ENCODE measurements at regions of chr11 and their contacts with region 1.

Region 1: GRCh38 chr11:118503216-118503615 is 24.1 kb upstream of the TTC36 start:
- DNase-seq: no peak
- ATAC-seq: no peak
- H3K4me3 ChIP-seq: no peak overlapping the region
- H3K27ac ChIP-seq: no peak overlapping the region
- H3K4me1 ChIP-seq: no peaks in the 10 kb centered on the region
- H3K27me3 ChIP-seq: no peaks in the 10 kb centered on the region
- CTCF ChIP-seq: no peak

Region 2: GRCh38 chr11:118366287-118366686 is 136.9 kb before region 1 on chr11:
- intact Hi-C with region 1: no loop called
- DNase-seq: peak in 2 of 6 donors; percentile 27 to 36
- ATAC-seq: peak; percentile 37 to 94 (median 71)
- H3K4me3 ChIP-seq: no peak overlapping the region
- H3K27ac ChIP-seq: no peak overlapping the region
- H3K4me1 ChIP-seq: peaks cover 0 to 17% (median 3%) of the 10 kb centered on the region in 3 donors
- H3K27me3 ChIP-seq: no peaks in the 10 kb centered on the region
- CTCF ChIP-seq: no peak

Region 3: DNA sequence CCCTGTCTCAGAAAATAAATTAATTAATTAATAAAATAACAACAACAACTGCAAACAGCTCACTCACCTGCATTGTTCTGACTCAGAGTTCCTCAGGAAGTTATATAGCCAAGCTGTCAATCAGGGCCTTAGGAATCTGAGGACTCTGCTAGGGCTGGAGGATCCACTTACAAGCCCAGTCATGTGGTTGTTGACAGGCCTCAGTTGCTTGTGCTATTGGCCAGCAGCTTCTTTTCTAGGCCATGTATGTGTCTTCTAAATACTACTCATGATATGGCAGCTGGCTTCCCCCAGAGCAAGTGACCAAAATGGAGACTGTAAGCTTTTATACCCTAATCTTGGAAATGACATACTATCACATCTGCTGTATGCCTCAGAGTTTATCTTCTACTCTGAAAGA is 122.6 kb before region 1 on chr11:
- intact Hi-C with region 1: loop called in 2 of 3 experiments (anchors 10 kb)
- DNase-seq: no peak
- ATAC-seq: no peak
- H3K4me3 ChIP-seq: no peak overlapping the region
- H3K27ac ChIP-seq: no peak overlapping the region
- H3K4me1 ChIP-seq: no peaks in the 10 kb centered on the region
- H3K27me3 ChIP-seq: no peaks in the 10 kb centered on the region
- CTCF ChIP-seq: no peak

Region 4: GRCh38 chr11:118398791-118399559 is 104.2 kb before region 1 on chr11:
- intact Hi-C with region 1: loop called in 1 of 3 experiments (anchors 10 kb)
- DNase-seq: no peak
- ATAC-seq: no peak
- H3K4me3 ChIP-seq: no peak overlapping the region
- H3K27ac ChIP-seq: no peak overlapping the region
- H3K4me1 ChIP-seq: peaks cover 9 to 19% (median 9%) of the 10 kb centered on the region in 3 donors
- H3K27me3 ChIP-seq: no peaks in the 10 kb centered on the region
- CTCF ChIP-seq: no peak

Region 5: DNA sequence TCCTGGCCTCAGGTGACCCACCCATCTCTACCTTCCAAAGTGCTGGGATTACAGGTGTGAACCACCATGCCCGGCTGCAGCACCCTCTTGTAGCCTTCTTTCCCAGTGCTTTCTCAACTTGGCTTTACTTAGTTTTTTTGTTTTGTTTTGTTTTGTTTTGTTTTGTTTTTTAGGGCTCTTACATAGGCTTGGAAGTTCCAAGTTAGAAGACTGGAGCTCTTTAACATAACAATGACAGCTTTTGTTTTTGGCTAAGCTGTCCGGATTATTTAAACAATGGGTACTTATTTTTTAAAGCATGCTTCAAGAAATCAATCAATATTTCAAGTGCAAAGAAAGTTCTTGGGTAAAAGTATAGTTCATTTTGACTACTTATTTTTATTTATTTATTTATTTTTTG is 41.0 kb before region 1 on chr11:
- intact Hi-C with region 1: no loop called
- DNase-seq: no peak
- ATAC-seq: no peak
- H3K4me3 ChIP-seq: no peak overlapping the region
- H3K27ac ChIP-seq: no peak overlapping the region
- H3K4me1 ChIP-seq: no peaks in the 10 kb centered on the region
- H3K27me3 ChIP-seq: no peaks in the 10 kb centered on the region
- CTCF ChIP-seq: no peak